ENCODE measurements at regions of chr15 and their contacts with region 1.

Region 1: GRCh38 chr15:81296673-81297072 is 27.3 kb downstream of the STARD5 start:
- DNase-seq: peak; percentile 67
- CTCF ChIP-seq: no peak

Region 2: GRCh38 chr15:80210612-80211573 is 1085.8 kb before region 1 on chr15:
- CTCF ChIA-PET with region 1: no interaction called
- POLR2A ChIA-PET with region 1: no interaction called
- DNase-seq: peak; percentile 43
- CTCF ChIP-seq: no peak

Region 3: DNA sequence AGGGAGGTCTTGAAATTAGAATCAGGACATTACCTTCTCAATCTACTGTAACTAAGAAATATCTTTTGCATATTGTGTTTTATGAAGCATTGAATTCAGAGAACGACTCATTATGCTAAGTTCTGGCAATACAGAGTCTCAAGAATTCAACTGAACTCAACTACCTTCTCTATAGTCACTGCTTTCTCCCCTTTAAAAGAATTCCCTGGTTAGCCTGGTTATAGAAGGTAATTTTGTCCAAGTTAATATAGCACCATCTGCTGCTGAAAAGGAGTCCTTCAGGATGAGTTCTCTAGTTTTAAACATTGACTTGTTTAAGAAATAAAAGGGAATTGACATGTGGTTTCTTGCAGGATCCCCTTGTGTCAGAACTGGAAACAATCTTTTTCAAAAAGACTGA is 39.8 kb before region 1 on chr15:
- CTCF ChIA-PET with region 1: no interaction called
- POLR2A ChIA-PET with region 1: no interaction called
- DNase-seq: no peak
- CTCF ChIP-seq: peak; percentile 23

Region 4: DNA sequence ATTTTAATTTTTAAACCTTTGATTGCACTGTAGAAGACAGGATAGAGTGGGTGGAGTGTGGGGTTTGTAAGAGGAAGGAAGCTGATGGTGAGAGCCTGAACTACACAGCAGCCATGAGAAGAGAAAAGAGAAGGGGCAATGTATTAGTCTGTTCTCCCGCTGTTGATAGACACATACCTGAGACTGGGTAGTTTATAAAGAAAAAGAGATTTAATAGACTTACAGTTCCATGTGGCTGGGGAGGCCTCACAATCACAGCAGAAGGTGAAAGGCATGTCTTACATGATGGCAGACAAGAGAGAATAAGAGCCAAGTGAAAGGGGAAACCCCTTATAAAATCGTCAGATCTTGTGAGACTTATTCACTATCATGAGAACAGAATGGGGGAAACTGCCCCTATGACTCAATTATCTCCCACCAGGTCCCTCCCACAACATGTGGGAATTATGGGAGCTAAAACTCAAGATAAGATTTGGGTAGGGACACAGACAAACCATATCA is 10.0 kb before region 1 on chr15:
- CTCF ChIA-PET with region 1: interaction called, 39 read pairs
- POLR2A ChIA-PET with region 1: interaction called, 19 read pairs
- DNase-seq: no peak
- CTCF ChIP-seq: no peak

Region 5: GRCh38 chr15:81311752-81312464 is 15.2 kb after region 1 on chr15:
- CTCF ChIA-PET with region 1: interaction called, 20 read pairs
- POLR2A ChIA-PET with region 1: interaction called, 17 read pairs
- DNase-seq: peak; percentile 47
- CTCF ChIP-seq: no peak

Region 6: DNA sequence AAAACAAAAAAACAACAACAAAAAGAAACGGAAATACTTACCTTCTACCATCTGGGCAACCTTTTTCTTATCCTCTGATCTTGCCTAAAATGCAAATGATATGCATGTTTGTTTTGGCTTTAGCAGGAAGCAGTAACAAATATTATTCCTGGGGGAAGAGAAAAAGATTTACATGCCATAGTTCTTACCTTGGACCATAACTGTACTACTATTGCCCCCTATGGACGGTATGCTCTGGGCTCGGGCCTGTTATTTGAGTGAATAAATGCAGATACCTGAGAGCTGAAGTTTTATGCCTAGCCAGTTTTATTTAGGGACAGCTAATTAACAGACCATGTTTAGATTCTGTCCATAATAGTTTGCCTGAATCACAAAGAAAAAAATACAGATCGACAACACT is 39.9 kb after region 1 on chr15:
- CTCF ChIA-PET with region 1: interaction called, 11 read pairs
- POLR2A ChIA-PET with region 1: no interaction called
- DNase-seq: peak; percentile 47
- CTCF ChIP-seq: peak; percentile 45

Region 7: GRCh38 chr15:81384891-81385720 is 88.4 kb after region 1 on chr15:
- CTCF ChIA-PET with region 1: no interaction called
- POLR2A ChIA-PET with region 1: no interaction called
- DNase-seq: no peak
- CTCF ChIP-seq: no peak

Measured in GM10248 (cell line).